ENCODE measurements at regions of chr20 and their contacts with region 1.

Region 1: DNA sequence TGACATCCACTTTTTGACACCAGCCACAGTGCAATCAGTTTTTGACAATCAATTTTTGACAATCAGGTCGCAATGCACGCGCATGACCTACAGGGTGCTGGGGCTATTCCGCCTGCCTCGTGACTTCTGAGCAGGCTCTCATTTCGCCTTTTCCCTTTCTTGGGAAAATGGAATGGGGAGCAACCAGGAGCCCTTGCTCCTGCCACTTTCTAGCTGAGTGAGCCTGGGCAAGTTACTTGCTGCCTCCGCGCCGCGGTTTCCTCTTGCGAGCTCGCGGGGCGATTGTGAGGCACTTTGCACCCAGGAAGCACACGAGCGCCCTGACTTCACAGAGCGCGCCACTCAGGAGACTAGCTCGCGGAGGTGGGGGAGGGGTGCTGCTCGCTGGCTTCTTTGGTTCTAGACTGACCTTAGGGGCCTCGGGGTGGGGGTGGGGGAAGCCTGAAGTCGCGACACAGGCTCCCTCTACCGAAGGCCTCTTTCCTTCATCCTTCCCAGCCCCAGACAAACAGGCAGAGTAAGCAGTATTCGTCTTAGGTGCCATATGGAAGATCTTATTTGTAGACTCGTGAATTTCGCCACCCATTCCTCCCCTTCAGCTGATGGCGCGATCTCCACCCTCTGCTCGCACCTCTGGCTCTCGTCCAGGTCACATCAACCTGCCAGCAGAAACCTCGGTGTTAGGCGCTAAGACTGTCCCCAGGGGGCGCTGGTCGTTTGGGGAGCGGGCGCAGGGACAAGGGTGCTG is 4.6 kb downstream of the TP53TG5 start:
- DNase-seq: peak; percentile 80 to 91 (median 85)
- H3K4me3 ChIP-seq: peak overlapping the region; percentile 79
- H3K4me3 Mint-ChIP-seq: peak overlapping the region; percentile 84 to 94 (median 86)
- H3K27ac ChIP-seq: peak overlapping the region; percentile 39
- H3K27ac Mint-ChIP-seq: peak overlapping the region; percentile 78 to 98 (median 94)
- H3K4me1 ChIP-seq: peaks cover 13% of the 10 kb centered on the region
- H3K4me1 Mint-ChIP-seq: peaks cover 30 to 47% (median 33%) of the 10 kb centered on the region in 3 donors
- H3K27me3 ChIP-seq: no peaks in the 10 kb centered on the region
- H3K27me3 Mint-ChIP-seq: no peaks in the 10 kb centered on the region

Region 2: GRCh38 chr20:45036044-45036755 is 337.3 kb before region 1 on chr20:
- CTCF ChIA-PET with region 1: no interaction called
- POLR2A ChIA-PET with region 1: no interaction called
- DNase-seq: no peak
- H3K4me3 ChIP-seq: no peak overlapping the region
- H3K4me3 Mint-ChIP-seq: peak overlapping the region in 2 of 7 donors; percentile 10 to 37
- H3K27ac ChIP-seq: no peak overlapping the region
- H3K27ac Mint-ChIP-seq: peak overlapping the region in 7 of 8 donors; percentile 4 to 83 (median 55)
- H3K4me1 ChIP-seq: peaks cover 55% of the 10 kb centered on the region
- H3K4me1 Mint-ChIP-seq: peaks cover 71 to 95% (median 93%) of the 10 kb centered on the region in 3 donors
- H3K27me3 ChIP-seq: no peaks in the 10 kb centered on the region
- H3K27me3 Mint-ChIP-seq: no peaks in the 10 kb centered on the region

Region 3: DNA sequence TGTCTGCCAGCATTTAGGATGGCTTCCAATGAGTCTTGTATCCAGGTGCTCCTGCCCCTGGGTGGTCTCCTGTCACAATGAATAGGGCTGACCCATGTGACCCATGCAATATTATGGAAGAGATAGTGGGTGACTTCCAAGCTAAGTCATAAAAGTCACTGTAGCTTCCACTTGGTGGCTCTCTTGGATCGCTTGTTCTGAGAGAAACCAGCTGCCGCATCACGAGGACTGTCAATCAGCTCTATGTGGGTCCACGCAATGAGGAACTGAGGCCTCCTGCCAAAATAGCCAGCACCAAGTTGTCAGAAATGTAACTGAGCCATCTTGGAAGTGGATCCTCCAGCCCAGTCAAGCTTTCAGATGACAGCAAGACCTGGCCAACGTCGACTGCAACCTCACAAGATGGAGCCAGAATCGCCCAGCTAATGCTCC is 50.6 kb before region 1 on chr20:
- CTCF ChIA-PET with region 1: interaction called, 10 read pairs
- POLR2A ChIA-PET with region 1: no interaction called
- DNase-seq: no peak
- H3K4me3 ChIP-seq: no peak overlapping the region
- H3K4me3 Mint-ChIP-seq: no peak overlapping the region
- H3K27ac ChIP-seq: no peak overlapping the region
- H3K27ac Mint-ChIP-seq: peak overlapping the region in 1 of 8 donors; percentile 89
- H3K4me1 ChIP-seq: peaks cover 26% of the 10 kb centered on the region
- H3K4me1 Mint-ChIP-seq: peaks cover 20 to 25% (median 22%) of the 10 kb centered on the region in 3 donors
- H3K27me3 ChIP-seq: no peaks in the 10 kb centered on the region
- H3K27me3 Mint-ChIP-seq: no peaks in the 10 kb centered on the region

Region 4: GRCh38 chr20:45341939-45342859 is 31.3 kb before region 1 on chr20:
- CTCF ChIA-PET with region 1: no interaction called
- POLR2A ChIA-PET with region 1: no interaction called
- DNase-seq: no peak
- H3K4me3 ChIP-seq: no peak overlapping the region
- H3K4me3 Mint-ChIP-seq: no peak overlapping the region
- H3K27ac ChIP-seq: no peak overlapping the region
- H3K27ac Mint-ChIP-seq: no peak overlapping the region
- H3K4me1 ChIP-seq: peaks cover 1% of the 10 kb centered on the region
- H3K4me1 Mint-ChIP-seq: peaks cover 5 to 7% (median 7%) of the 10 kb centered on the region in 3 donors
- H3K27me3 ChIP-seq: no peaks in the 10 kb centered on the region
- H3K27me3 Mint-ChIP-seq: peaks cover 0 to 3% of the 10 kb centered on the region in 2 donors

Region 5: GRCh38 chr20:45387274-45387673 is 13.7 kb after region 1 on chr20:
- CTCF ChIA-PET with region 1: interaction called, 19 read pairs
- POLR2A ChIA-PET with region 1: no interaction called
- DNase-seq: no peak
- H3K4me3 ChIP-seq: no peak overlapping the region
- H3K4me3 Mint-ChIP-seq: no peak overlapping the region
- H3K27ac ChIP-seq: no peak overlapping the region
- H3K27ac Mint-ChIP-seq: no peak overlapping the region
- H3K4me1 ChIP-seq: no peaks in the 10 kb centered on the region
- H3K4me1 Mint-ChIP-seq: peaks cover 2 to 10% (median 3%) of the 10 kb centered on the region in 3 donors
- H3K27me3 ChIP-seq: no peaks in the 10 kb centered on the region
- H3K27me3 Mint-ChIP-seq: no peaks in the 10 kb centered on the region

Region 6: DNA sequence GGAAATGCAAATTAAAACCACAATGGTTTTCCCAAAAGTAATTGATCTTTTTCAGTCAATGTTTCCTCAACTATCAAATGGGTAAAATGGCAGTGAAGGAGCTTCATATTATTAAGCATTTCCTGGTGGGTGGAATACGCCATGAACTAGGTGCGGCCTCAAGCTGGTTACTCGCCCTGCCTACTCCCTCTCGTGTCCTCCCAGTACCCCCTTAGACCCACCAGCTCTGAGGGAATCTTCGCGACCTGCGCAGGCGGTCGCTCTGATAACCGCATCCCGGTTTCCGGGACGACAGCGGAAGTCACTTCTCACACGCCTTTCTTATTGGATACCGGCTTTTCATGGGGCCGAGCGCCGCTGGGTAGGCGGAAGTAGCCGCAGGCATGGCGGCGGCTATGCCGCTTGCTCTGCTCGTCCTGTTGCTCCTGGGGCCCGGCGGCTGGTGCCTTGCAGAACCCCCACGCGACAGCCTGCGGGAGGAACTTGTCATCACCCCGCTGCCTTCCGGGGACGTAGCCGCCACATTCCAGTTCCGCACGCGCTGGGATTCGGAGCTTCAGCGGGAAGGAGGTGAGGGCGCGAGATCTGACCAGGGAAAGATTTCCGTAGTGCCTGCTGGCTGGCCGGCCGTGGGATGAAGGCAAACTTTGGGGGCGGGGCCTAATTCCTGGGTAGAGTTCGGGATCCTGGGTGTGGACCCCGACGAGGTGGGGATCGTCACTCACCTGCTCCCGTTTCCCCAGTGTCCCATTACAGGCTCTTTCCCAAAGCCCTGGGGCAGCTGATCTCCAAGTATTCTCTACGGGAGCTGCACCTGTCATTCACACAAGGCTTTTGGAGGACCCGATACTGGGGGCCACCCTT is 42.5 kb after region 1 on chr20 and contains the start of gene PIGT:
- CTCF ChIA-PET with region 1: interaction called, 23 read pairs
- POLR2A ChIA-PET with region 1: interaction called, 22 read pairs
- DNase-seq: peak; percentile 85 to 95 (median 94)
- H3K4me3 ChIP-seq: peak within 1 kb of the TSS; percentile 86
- H3K4me3 Mint-ChIP-seq: peak within 1 kb of the TSS; percentile 94 to 99 (median 97)
- H3K27ac ChIP-seq: peak within 1 kb of the TSS; percentile 64
- H3K27ac Mint-ChIP-seq: peak within 1 kb of the TSS; percentile 96 to 99 (median 98)
- H3K4me1 ChIP-seq: peaks cover 21% of the 10 kb centered on the region
- H3K4me1 Mint-ChIP-seq: peaks cover 36 to 54% (median 50%) of the 10 kb centered on the region in 3 donors
- H3K27me3 ChIP-seq: no peaks in the 10 kb centered on the region
- H3K27me3 Mint-ChIP-seq: no peaks in the 10 kb centered on the region
- total RNA-seq, gene PIGT: 76.3 to 76.4 TPM

Region 7: DNA sequence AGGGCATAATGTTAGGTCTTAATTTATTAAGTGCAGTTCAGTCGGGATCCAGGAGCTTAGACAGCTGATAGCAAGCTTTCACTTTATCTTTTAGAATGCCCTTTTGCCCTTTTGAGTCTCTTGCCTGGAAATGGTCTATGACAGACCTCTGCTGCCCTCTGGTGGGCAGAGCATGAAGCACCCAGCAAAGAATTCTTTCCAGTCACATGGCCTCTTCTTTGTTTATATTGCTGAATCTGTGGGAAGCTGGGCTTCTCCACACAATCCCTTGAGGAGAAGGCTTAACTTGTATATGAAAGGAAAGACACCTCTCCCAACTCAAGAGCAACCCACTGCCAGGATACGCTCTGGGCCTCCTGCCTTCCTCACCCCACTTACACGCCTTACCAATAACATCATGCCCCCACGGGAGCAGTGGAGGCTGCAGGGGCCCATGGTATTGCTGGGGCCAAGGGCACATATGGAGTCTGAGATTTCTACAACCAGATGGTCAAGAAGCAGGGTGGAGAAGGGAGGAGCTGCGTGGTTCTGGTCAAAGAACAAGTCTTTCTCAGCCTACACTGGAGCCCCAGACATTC is 397.7 kb after region 1 on chr20:
- CTCF ChIA-PET with region 1: interaction called, 15 read pairs
- POLR2A ChIA-PET with region 1: no interaction called
- DNase-seq: peak; percentile 64 to 81 (median 69)
- H3K4me3 ChIP-seq: no peak overlapping the region
- H3K4me3 Mint-ChIP-seq: no peak overlapping the region
- H3K27ac ChIP-seq: no peak overlapping the region
- H3K27ac Mint-ChIP-seq: peak overlapping the region in 2 of 8 donors; percentile 26 to 71
- H3K4me1 ChIP-seq: no peaks in the 10 kb centered on the region
- H3K4me1 Mint-ChIP-seq: peaks cover 3 to 4% (median 4%) of the 10 kb centered on the region in 3 donors
- H3K27me3 ChIP-seq: no peaks in the 10 kb centered on the region
- H3K27me3 Mint-ChIP-seq: peaks cover 14 to 20% of the 10 kb centered on the region in 2 donors

Measured in CD8-positive, alpha-beta memory T cell (primary cell).